T-cell (primary cell): ENCODE measurements at regions of chr12 and their contacts with region 1.

Region 1: DNA sequence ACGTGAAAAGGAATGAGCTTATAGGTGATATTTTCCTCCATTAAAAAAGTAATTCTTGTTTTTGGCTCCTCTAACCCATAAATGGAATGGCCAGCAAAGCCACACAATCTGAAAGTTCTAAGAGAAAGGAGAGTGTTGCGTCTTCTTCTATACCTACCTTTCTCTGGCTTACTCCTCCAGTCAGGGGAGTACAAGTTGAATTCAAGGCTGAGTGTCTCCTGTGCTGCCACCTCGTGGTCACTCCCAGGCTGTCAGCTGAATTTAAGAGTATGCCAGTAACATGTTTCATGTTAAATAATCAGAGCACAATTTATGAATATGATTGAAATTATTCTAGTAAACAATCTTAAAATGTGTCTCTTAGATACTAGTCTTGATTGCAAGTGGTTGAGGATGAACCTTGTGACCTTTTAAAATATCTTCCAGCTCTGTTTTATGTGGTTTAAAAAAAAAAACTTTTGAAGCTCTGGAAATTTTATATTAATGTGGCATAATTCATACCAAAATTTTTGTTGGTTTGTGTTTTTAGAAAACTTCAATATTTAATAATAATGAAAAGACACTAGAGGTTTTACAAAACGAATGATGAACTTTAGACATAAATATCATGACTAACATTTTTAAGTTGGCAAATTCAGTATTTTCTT is 31.7 kb downstream of the PTHLH start:
- DNase-seq: peak; percentile 23 to 76 (median 54)
- ATAC-seq: peak in 3 of 4 experiments; percentile 50 to 67 (median 66)
- H3K4me3 ChIP-seq: no peak overlapping the region
- H3K4me3 Mint-ChIP-seq: no peak overlapping the region
- H3K27ac ChIP-seq: no peak overlapping the region
- H3K27ac Mint-ChIP-seq: no peak overlapping the region
- H3K4me1 ChIP-seq: no peaks in the 10 kb centered on the region
- H3K4me1 Mint-ChIP-seq: no peaks in the 10 kb centered on the region
- H3K27me3 ChIP-seq: no peaks in the 10 kb centered on the region
- H3K27me3 Mint-ChIP-seq: peaks cover 4 to 20% of the 10 kb centered on the region in 2 donors

Region 2: DNA sequence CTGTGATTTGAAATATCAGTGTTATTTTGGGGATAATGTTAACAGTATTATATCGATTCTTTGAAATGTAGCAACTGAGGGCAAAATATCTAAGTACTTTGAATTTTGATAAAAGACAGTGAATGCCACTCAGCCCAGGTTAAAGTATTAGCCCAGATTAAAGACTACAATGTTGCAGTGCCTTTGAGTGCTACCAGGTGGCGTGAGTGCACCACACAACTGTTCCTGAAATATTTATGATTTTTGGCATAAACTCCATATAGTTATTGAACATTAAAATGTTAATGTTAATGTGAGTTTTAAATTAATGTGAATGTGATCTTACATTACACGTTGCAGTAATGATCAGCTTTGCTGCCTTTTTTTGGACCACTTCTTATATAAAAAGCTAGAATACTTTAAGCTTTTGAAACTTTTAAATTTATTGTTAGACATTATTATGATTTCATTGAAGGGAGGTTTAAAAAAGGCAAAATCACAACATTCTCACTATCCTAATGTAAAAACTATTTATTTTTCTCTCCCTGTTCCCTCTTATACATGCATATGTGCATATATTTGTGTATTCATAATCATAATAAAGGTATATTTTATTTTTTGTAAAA is 207.7 kb before region 1 on chr12:
- CTCF ChIA-PET with region 1: interaction called, 11 to 27 read pairs
- POLR2A ChIA-PET with region 1: no interaction called
- DNase-seq: peak in 18 of 35 experiments; percentile 6 to 57 (median 22)
- ATAC-seq: no peak
- H3K4me3 ChIP-seq: no peak overlapping the region
- H3K4me3 Mint-ChIP-seq: no peak overlapping the region
- H3K27ac ChIP-seq: no peak overlapping the region
- H3K27ac Mint-ChIP-seq: no peak overlapping the region
- H3K4me1 ChIP-seq: no peaks in the 10 kb centered on the region
- H3K4me1 Mint-ChIP-seq: peaks cover 0 to 3% (median 0%) of the 10 kb centered on the region in 3 donors
- H3K27me3 ChIP-seq: no peaks in the 10 kb centered on the region
- H3K27me3 Mint-ChIP-seq: no peaks in the 10 kb centered on the region